ENCODE measurements at regions of chr18 and their contacts with region 1.

Region 1: GRCh38 chr18:21955757-21956652 is 213.4 kb upstream of the GATA6 start:
- H3K4me3 Mint-ChIP-seq: no peak overlapping the region
- H3K27ac Mint-ChIP-seq: no peak overlapping the region
- H3K4me1 Mint-ChIP-seq: no peaks in the 10 kb centered on the region
- H3K27me3 Mint-ChIP-seq: no peaks in the 10 kb centered on the region

Region 2: GRCh38 chr18:21194871-21195771 is 760.9 kb before region 1 on chr18:
- intact Hi-C with region 1: loop called (anchors 2 kb)
- H3K4me3 Mint-ChIP-seq: no peak overlapping the region
- H3K27ac Mint-ChIP-seq: no peak overlapping the region
- H3K4me1 Mint-ChIP-seq: no peaks in the 10 kb centered on the region
- H3K27me3 Mint-ChIP-seq: peaks cover 26% of the 10 kb centered on the region

Region 3: GRCh38 chr18:21489119-21489750 is 466.8 kb before region 1 on chr18:
- intact Hi-C with region 1: loop called (anchors 1 kb)
- H3K4me3 Mint-ChIP-seq: no peak overlapping the region
- H3K27ac Mint-ChIP-seq: no peak overlapping the region
- H3K4me1 Mint-ChIP-seq: no peaks in the 10 kb centered on the region
- H3K27me3 Mint-ChIP-seq: no peaks in the 10 kb centered on the region

Region 4: GRCh38 chr18:21820035-21820810 is 135.8 kb before region 1 on chr18:
- intact Hi-C with region 1: loop called (anchors 5 kb)
- H3K4me3 Mint-ChIP-seq: no peak overlapping the region
- H3K27ac Mint-ChIP-seq: no peak overlapping the region
- H3K4me1 Mint-ChIP-seq: no peaks in the 10 kb centered on the region
- H3K27me3 Mint-ChIP-seq: no peaks in the 10 kb centered on the region

Region 5: GRCh38 chr18:21897811-21898210 is 58.2 kb before region 1 on chr18:
- intact Hi-C with region 1: no loop called
- H3K4me3 Mint-ChIP-seq: no peak overlapping the region
- H3K27ac Mint-ChIP-seq: no peak overlapping the region
- H3K4me1 Mint-ChIP-seq: no peaks in the 10 kb centered on the region
- H3K27me3 Mint-ChIP-seq: peaks cover 13% of the 10 kb centered on the region

Measured in dendritic cell treated with granulocyte-macrophage colony-stimulating factor and Interleukin-4, amounts not matched to agents 40 ng/mL and 50 ng/mL, for 4 days (primary cell).